MCF 10A (cell line): ENCODE measurements at regions of chr2 and their contacts with region 1.

Region 1: GRCh38 chr2:112784199-112785189 is at the start of gene IL1A:
- DNase-seq: peak; percentile 92
- H3K4me3 Mint-ChIP-seq: peak within 1 kb of the TSS; percentile 79
- H3K27ac Mint-ChIP-seq: peak within 1 kb of the TSS; percentile 85
- H3K4me1 Mint-ChIP-seq: peaks cover 57% of the 10 kb centered on the region
- H3K27me3 Mint-ChIP-seq: no peaks in the 10 kb centered on the region
- CTCF ChIP-seq: no peak
- total RNA-seq, gene IL1A: 99.1 and 170 TPM in 2 replicates

Region 2: DNA sequence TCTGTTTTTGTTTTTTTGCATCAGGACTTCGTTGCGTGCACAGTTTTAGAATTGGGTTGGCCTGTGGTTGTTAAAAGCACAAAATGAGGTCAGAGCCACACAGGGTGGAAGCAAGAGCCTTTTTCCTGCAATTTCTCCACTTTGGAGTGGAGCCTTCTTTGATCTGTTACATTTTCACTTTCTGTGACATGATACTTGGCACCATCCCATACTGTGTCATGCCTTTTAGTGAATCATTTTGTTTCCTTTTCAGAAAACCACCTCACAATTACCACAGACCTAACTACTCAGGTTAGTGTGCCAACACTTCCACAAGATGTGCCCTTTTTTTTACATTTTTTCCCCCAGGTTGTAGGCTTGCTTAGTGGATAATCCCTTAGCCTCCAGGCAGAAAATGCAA is 853.6 kb before region 1 on chr2:
- CTCF ChIA-PET with region 1: no interaction called
- POLR2A ChIA-PET with region 1: no interaction called
- intact Hi-C with region 1: no loop called
- DNase-seq: peak; percentile 91
- H3K4me3 Mint-ChIP-seq: peak overlapping the region; percentile 10
- H3K27ac Mint-ChIP-seq: peak overlapping the region; percentile 29
- H3K4me1 Mint-ChIP-seq: peaks cover 9% of the 10 kb centered on the region
- H3K27me3 Mint-ChIP-seq: peaks cover 70% of the 10 kb centered on the region
- CTCF ChIP-seq: no peak

Region 3: GRCh38 chr2:112674229-112674628 is 110.3 kb before region 1 on chr2:
- CTCF ChIA-PET with region 1: no interaction called
- POLR2A ChIA-PET with region 1: no interaction called
- intact Hi-C with region 1: no loop called
- DNase-seq: no peak
- H3K4me3 Mint-ChIP-seq: no peak overlapping the region
- H3K27ac Mint-ChIP-seq: no peak overlapping the region
- H3K4me1 Mint-ChIP-seq: peaks cover 5% of the 10 kb centered on the region
- H3K27me3 Mint-ChIP-seq: no peaks in the 10 kb centered on the region
- CTCF ChIP-seq: no peak

Region 4: DNA sequence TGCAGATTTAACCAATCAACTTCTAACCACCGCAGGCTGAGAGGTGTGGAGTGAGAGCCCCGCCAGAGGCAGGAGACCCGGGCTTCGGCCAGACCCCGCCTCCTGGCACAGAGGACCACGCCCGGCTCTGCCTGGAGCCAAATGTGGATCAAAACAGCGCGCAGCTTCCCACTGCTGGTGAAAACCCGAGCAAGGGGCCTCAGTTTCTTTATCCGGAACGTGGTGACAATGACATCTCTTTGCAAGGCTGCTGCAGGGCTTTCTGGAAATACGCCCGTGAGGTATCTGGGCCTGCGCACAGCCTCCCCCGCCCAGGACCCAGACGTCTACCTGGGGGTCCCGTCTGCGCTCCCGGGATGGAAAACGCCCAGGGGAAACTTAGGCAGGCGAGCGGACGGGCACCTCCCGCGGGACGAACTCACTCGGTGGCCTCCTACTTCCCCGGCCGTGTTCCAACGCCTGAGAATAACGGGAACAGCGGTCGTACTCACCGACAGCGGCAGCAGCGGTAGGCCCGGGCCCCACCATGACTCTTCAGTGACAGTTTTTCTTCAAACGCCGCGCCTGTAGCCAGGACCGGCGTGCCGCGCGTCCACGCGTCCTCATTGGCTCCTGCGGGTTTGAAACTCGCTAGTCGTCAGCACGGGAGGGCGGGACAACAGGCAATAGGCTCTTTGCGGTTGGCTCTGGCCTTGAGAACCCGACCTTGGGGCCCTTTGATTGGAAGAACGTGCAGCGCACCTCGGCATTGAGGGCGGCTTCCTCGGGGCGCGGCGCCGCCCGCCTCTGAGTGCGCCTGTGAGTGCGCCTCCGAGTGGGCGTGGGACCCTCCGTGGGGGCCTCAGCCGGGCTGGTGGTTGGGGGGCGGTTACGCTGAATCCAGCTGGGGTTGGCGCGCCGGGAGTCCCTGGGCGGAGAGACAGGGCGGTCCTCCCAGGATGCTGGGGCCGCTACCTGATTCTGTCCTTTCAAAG is 20.1 kb before region 1 on chr2 and contains the start of gene CKAP2L:
- CTCF ChIA-PET with region 1: interaction called, 4 read pairs
- POLR2A ChIA-PET with region 1: interaction called, 86 read pairs
- intact Hi-C with region 1: no loop called
- DNase-seq: peak; percentile 99
- H3K4me3 Mint-ChIP-seq: peak within 1 kb of the TSS; percentile 97
- H3K27ac Mint-ChIP-seq: peak within 1 kb of the TSS; percentile 95
- H3K4me1 Mint-ChIP-seq: peaks cover 28% of the 10 kb centered on the region
- H3K27me3 Mint-ChIP-seq: no peaks in the 10 kb centered on the region
- CTCF ChIP-seq: no peak
- total RNA-seq, gene CKAP2L: 14.7 and 21.6 TPM in 2 replicates

Region 5: GRCh38 chr2:112803691-112804521 is 19.4 kb after region 1 on chr2:
- CTCF ChIA-PET with region 1: interaction called, 4 read pairs
- POLR2A ChIA-PET with region 1: interaction called, 112 read pairs
- intact Hi-C with region 1: no loop called
- DNase-seq: peak; percentile 66
- H3K4me3 Mint-ChIP-seq: no peak overlapping the region
- H3K27ac Mint-ChIP-seq: peak overlapping the region; percentile 97
- H3K4me1 Mint-ChIP-seq: peaks cover 30% of the 10 kb centered on the region
- H3K27me3 Mint-ChIP-seq: no peaks in the 10 kb centered on the region
- CTCF ChIP-seq: no peak

Region 6: DNA sequence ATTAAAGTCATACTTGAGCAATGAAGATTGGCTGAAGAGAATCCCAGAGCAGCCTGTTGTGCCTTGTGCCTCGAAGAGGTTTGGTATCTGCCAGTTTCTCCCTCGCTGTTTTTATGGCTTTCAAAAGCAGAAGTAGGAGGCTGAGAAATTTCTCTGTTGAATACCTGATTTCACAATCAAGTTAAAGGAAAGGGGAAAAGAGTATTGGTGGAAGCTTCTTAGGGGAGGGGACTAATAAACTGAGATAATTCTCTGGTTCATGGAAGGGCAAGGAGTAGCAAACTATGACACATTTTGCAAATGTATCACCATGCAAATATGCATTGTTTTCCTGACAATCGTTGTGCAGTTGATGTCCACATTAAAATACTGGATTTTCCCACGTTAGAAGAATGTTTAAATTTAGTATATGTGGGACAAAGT is 52.2 kb after region 1 on chr2 and contains the start of gene IL1B:
- CTCF ChIA-PET with region 1: no interaction called
- POLR2A ChIA-PET with region 1: interaction called, 15 read pairs
- intact Hi-C with region 1: loop called (anchors 1 kb)
- DNase-seq: peak; percentile 87
- H3K4me3 Mint-ChIP-seq: peak within 1 kb of the TSS; percentile 46
- H3K27ac Mint-ChIP-seq: peak within 1 kb of the TSS; percentile 60
- H3K4me1 Mint-ChIP-seq: peaks cover 50% of the 10 kb centered on the region
- H3K27me3 Mint-ChIP-seq: no peaks in the 10 kb centered on the region
- CTCF ChIP-seq: no peak
- total RNA-seq, gene IL1B: 5.4 and 5.5 TPM in 2 replicates

Region 7: DNA sequence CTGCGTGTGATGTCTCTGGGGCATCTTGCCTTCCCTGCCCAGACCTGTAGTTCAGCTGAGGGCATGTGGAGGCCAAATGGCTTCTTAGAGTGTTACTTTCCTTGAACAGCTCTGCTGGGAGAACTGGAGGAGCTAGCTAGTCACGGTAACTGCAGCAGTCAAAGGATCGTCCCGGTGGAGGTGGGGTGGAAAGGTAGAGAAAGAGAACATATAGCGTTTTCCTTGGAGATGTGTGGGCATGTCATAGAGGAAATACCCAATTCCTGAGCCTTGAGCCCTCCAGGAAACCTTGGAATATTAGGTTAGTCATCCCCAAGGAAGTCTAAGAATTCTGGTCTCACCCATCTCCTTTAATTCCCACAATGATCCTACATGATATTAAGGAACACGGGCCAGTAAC is 92.9 kb after region 1 on chr2:
- CTCF ChIA-PET with region 1: no interaction called
- POLR2A ChIA-PET with region 1: interaction called, 10 read pairs
- intact Hi-C with region 1: loop called (anchors 1 kb)
- DNase-seq: peak; percentile 53
- H3K4me3 Mint-ChIP-seq: no peak overlapping the region
- H3K27ac Mint-ChIP-seq: no peak overlapping the region
- H3K4me1 Mint-ChIP-seq: peaks cover 35% of the 10 kb centered on the region
- H3K27me3 Mint-ChIP-seq: no peaks in the 10 kb centered on the region
- CTCF ChIP-seq: no peak

Region 8: DNA sequence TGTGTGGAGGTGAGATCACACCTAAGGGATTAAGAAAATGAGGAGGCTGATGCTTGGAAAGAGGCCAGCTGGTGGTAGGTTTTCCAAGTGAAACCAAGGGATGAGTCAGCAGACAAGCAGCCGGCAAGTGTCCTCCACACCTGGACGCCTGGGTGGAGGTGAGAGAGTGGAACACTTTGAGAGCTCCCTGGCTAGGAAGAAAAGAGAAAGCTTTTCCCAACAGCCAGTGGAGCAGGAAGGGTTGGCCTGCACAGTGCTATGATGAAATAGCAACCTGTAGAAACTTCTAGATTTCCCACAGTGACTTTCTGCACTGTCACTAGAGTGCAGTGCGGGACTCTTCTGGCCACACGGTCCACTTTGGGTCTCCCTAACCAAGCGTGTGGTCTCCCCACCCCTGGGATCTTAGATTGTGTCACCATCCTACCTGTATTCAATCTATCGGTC is 106.9 kb after region 1 on chr2:
- CTCF ChIA-PET with region 1: interaction called, 27 read pairs
- POLR2A ChIA-PET with region 1: interaction called, 24 read pairs
- intact Hi-C with region 1: no loop called
- DNase-seq: peak; percentile 98
- H3K4me3 Mint-ChIP-seq: no peak overlapping the region
- H3K27ac Mint-ChIP-seq: peak overlapping the region; percentile 42
- H3K4me1 Mint-ChIP-seq: no peaks in the 10 kb centered on the region
- H3K27me3 Mint-ChIP-seq: no peaks in the 10 kb centered on the region
- CTCF ChIP-seq: no peak

Region 9: DNA sequence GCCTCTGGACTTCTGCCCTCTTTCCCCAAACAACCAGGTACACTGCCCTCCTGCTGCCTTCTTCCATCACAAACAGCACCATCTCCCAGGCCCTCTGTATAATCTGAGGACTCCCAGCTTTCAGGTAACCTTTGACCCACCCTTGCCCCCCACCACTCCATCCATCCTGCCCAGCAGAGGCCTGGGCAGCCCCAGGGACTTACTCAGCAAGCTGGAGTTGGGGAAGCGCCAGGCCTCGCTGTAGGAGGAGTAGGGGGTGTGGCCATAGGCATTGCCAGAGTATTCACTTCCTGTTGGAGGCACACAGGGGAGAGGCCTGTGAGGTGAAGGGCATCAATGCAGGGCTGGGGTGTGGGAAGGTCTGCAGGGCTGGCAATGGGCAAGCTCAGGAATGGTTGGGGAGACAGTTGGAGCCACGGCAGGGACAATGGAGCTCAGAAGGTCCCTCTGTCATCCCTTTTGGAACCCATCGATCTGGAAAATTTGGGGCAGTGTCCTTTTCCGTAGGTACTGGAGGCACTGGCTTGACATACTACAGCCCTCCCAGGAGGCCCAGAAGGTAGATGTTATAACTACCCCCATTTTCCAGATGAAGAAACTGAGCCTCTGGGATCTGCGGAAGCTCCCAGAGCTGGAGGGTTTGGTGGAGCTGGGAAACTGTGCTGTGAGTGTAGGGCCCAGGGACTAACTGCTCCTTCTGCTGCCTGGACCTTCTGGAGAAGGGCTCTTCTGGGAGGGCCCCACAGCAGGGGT is 435.6 kb after region 1 on chr2:
- CTCF ChIA-PET with region 1: no interaction called
- POLR2A ChIA-PET with region 1: no interaction called
- intact Hi-C with region 1: no loop called
- DNase-seq: peak; percentile 74
- H3K4me3 Mint-ChIP-seq: no peak overlapping the region
- H3K27ac Mint-ChIP-seq: peak overlapping the region; percentile 40
- H3K4me1 Mint-ChIP-seq: peaks cover 15% of the 10 kb centered on the region
- H3K27me3 Mint-ChIP-seq: no peaks in the 10 kb centered on the region
- CTCF ChIP-seq: no peak